ENCODE measurements at regions of chr13 and their contacts with region 1.

Region 1: GRCh38 chr13:39394796-39395678 is 208.0 kb downstream of the LHFPL6 start:
- DNase-seq: no peak

Region 2: GRCh38 chr13:39433651-39434050 is 38.6 kb after region 1 on chr13:
- intact Hi-C with region 1: loop called in 1 of 2 experiments (anchors 2 kb)
- DNase-seq: no peak

Region 3: GRCh38 chr13:39484506-39485313 is 89.7 kb after region 1 on chr13:
- intact Hi-C with region 1: loop called in 1 of 2 experiments (anchors 10 kb)
- DNase-seq: no peak